ENCODE measurements at regions of chr22 and their contacts with region 1.

Region 1: DNA sequence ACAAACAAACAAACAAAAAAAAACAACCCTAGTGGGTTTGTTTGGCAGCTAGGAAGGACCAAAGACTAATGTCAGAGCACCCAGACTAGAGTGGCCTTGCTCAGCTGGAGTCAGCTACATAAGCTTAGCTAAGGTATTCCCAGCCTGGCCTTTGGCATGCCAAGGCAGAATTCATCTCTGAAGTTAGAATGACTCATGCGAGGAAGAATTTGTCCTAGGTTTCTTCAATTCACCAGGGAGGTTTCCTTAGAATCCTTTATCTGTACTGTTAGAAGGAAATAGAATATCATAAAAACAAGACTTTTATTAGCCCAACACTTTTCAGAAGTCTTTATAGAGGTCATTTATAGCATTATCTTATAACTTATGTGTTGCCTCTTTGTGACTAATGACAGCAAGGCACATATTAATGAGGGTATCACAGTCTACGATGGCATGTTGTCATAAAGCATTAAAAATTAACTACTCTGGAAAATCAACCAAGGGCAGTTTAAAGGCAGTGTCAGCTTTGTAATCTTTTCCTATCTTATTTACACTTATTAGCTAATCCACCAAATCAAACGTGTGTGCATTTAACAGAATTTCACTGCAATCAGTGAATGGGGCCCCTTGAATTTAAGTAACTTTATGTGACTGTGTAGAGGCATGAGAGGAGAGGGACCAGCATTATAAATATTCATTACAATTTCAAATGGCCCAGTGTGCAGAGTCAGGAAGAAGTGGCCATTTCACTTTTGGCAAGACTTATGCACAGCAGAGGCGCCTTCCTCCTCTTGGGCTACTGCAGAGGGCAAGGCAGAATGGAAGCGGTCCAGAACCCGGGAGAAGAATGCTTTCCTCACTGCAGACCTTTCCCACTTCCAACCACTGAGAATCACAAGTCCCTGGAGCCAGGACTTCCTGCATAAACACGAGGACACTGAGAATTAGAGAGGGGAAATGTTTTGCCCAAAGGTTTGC is 36.3 kb downstream of the SLC5A1 start:
- DNase-seq: no peak
- CTCF ChIP-seq: no peak

Region 2: DNA sequence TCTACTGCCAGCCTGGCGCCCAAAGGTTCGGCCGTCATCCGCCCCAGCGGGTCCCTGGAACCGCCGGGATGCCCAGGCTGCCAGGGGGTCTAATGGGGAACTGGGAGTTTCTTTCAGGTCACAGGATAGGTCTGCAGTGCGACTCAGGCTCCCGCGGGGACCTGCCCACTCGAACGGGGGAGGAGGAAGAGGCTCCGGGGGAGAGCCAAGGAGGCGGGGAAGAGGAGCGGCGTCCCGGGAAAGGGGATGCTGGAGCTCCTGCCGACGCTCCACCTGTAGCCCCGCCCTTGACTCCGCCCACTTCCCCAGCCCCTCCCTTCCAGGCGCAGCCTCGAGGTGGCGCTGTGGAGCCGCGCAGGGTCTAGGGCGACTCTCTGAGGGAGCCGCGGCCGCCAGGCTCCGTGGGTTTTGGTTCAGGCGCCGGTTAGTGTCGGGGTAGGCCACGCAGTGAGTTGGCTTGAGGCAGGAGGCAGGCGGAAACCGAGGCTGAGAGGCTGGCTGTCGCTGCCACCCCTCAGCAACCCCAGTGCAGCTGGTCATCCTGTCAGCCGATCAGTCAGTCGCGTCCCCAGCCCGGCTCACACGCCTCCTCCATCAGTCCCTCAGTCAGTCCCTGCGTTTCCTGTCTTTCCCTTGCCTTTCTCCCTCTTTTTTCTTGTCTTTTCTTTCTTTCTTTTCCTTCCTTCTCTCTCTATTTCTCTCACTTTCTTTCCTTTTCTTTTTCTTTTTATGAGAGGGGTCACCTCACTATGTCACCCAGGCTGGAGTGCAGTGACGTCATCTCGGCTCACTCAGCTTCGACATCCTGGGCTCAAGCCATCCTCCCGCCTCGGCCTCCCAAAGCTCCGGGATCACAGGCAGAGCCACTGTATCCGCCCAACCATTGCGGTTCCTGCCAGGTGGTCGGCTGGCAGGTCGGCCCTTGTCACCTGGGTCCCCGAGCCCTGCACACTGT is 108.6 kb before region 1 on chr22:
- in situ Hi-C with region 1: loop called (anchors 10 kb)
- DNase-seq: peak; percentile 95
- CTCF ChIP-seq: peak; percentile 91

Measured in GM13976 (cell line).